ENCODE measurements at regions of chr9 and their contacts with region 1.

Region 1: DNA sequence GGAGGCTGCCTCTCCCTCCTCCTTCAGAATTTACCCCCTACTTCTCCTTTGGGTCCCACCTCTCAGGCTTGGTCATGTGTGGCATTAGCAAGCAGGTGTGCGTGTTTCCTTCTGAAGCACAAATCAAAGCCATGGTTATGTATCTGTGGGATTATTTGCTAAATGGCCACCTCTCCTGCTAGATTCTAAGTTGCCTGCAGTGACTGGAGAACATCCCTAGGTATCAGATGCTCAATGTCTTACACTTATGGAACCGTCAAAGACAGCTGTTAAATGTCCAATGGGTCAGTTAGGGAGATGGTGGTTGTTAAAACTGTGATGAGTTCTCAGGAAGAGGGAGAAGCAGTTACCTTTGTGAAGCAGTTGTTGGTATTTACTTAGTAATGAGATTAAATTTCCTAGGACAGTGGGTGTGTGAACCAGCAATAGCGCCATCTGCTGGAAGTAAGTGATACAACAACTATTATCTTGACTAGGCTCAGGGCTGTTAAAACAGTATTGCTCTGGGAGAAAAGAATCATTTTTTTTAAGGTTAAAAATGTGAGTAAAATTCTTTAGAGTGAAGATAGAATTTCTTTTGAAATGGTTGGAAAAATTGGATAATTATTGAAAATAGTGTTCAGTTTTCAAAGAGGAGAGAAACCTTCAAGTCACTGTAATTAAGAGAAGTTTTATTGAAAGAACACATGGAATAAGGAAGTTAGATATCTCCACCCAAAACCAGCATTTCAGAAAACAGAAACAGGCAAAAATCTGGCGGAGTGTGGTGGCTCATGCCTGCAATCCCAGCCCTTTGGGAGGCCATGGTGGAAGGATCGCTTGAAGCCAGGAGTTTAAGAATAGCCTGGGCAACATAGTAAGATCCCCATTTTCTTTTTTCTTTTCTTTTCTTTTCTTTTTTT is 71.3 kb downstream of the TMC1 start:
- DNase-seq: peak; percentile 37 to 67
- H3K4me3 ChIP-seq: no peak overlapping the region
- H3K27ac ChIP-seq: 0 out of 2 replicates have a peak overlapping the region, but pooled peaks have one; percentile 31
- H3K4me1 ChIP-seq: peaks cover 27% of the 10 kb centered on the region
- H3K27me3 ChIP-seq: no peaks in the 10 kb centered on the region
- CTCF ChIP-seq: peak; percentile 96

Region 2: DNA sequence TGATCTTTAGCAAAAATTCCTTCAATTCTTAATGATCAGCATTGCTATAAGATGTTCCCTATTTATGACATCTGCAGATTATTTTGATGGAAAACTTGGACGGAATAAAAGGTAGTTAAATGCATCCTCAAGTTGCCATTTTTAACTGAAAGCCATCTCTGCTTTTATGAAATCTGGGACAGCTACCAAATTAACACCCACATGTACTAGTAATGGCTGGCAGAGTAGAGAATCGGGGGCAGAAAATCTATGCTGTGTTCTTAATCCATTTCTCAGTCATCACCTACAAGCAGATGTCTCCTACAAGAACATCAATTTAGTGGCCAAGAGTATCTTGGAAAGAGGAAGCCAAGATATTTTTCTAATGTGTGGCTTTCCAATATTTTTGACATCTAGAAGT is 510.2 kb before region 1 on chr9:
- CTCF ChIA-PET with region 1: no interaction called
- POLR2A ChIA-PET with region 1: no interaction called
- intact Hi-C with region 1: no loop called
- DNase-seq: no peak
- H3K4me3 ChIP-seq: no peak overlapping the region
- H3K27ac ChIP-seq: no peak overlapping the region
- H3K4me1 ChIP-seq: no peaks in the 10 kb centered on the region
- H3K27me3 ChIP-seq: no peaks in the 10 kb centered on the region
- CTCF ChIP-seq: no peak

Region 3: GRCh38 chr9:72292256-72292682 is 300.5 kb before region 1 on chr9:
- CTCF ChIA-PET with region 1: no interaction called
- POLR2A ChIA-PET with region 1: interaction called, 6 read pairs
- intact Hi-C with region 1: loop called (anchors 1 kb)
- DNase-seq: no peak
- H3K4me3 ChIP-seq: no peak overlapping the region
- H3K27ac ChIP-seq: no peak overlapping the region
- H3K4me1 ChIP-seq: peaks cover 26% of the 10 kb centered on the region
- H3K27me3 ChIP-seq: no peaks in the 10 kb centered on the region
- CTCF ChIP-seq: peak; percentile 71

Region 4: GRCh38 chr9:72443855-72444254 is 148.9 kb before region 1 on chr9:
- CTCF ChIA-PET with region 1: no interaction called
- POLR2A ChIA-PET with region 1: interaction called, 9 read pairs
- intact Hi-C with region 1: loop called (anchors 5 kb)
- DNase-seq: no peak
- H3K4me3 ChIP-seq: no peak overlapping the region
- H3K27ac ChIP-seq: peak overlapping the region; percentile 82
- H3K4me1 ChIP-seq: peaks cover 42% of the 10 kb centered on the region
- H3K27me3 ChIP-seq: no peaks in the 10 kb centered on the region
- CTCF ChIP-seq: no peak

Region 5: GRCh38 chr9:72753266-72753893 is 160.6 kb after region 1 on chr9:
- CTCF ChIA-PET with region 1: interaction called, 6 read pairs
- POLR2A ChIA-PET with region 1: no interaction called
- intact Hi-C with region 1: loop called (anchors 5 kb)
- DNase-seq: peak in 1 of 2 experiments; percentile 18
- H3K4me3 ChIP-seq: no peak overlapping the region
- H3K27ac ChIP-seq: no peak overlapping the region
- H3K4me1 ChIP-seq: no peaks in the 10 kb centered on the region
- H3K27me3 ChIP-seq: no peaks in the 10 kb centered on the region
- CTCF ChIP-seq: peak; percentile 49

Region 6: GRCh38 chr9:72788966-72789735 is 196.4 kb after region 1 on chr9:
- CTCF ChIA-PET with region 1: no interaction called
- POLR2A ChIA-PET with region 1: no interaction called
- intact Hi-C with region 1: no loop called
- DNase-seq: peak; percentile 25 to 53
- H3K4me3 ChIP-seq: no peak overlapping the region
- H3K27ac ChIP-seq: no peak overlapping the region
- H3K4me1 ChIP-seq: 0 out of 2 replicates have a peak, but pooled peaks cover 3% of the 10 kb centered on the region
- H3K27me3 ChIP-seq: no peaks in the 10 kb centered on the region
- CTCF ChIP-seq: no peak